AG04450 (cell line): ENCODE measurements at regions of chr22 and their contacts with region 1.

Region 1: DNA sequence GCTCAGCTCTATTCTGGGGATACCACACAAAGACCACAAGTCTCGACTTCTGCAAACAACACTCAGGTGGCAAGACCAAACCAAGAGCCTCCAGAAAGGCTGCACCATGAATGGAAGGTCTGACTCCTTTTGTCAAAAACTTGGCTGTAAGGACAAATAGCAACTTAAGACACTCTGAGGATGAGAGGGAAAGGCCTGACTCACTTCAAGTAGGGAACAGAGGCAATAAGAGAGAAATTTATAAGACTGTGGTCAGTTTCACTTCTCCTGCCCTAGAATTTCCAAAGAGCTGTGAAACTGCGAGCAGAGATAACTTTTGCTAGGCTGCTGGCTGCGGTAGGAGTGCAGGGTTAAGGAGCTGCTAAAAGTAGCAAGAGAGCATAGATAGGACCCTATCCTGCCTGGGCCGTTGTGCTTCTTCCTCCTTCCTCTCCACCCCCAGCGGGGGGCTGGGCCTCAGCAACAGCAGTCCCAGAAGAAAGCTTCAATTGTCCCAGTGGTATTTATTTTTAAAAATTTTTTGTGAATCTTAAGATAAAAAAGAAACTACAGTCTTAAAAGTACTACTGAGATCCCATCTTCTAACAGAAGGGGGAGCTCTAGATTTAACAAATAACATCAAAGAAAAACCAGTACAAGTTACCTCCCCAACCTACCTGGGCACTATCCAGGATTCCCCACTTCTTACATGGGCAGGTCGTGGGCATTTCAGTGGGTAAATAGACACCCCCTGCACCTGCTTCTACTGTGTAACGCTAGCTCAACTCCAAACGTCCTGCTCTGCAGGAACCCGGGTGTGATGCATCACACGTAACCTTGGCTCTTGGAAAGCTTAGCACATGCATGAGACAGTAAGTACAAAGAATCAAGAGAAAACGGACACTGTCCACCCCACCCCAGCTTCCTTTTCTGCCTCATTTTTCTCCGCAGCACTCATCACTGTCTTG is 66.4 kb downstream of the SGSM3 start:
- DNase-seq: peak; percentile 38
- H3K4me3 ChIP-seq: peak overlapping the region; percentile 34
- H3K27ac ChIP-seq: peak overlapping the region; percentile 74
- H3K27me3 ChIP-seq: no peaks in the 10 kb centered on the region
- CTCF ChIP-seq: peak; percentile 54; the same call in 1 of the 2 replicates

Region 2: DNA sequence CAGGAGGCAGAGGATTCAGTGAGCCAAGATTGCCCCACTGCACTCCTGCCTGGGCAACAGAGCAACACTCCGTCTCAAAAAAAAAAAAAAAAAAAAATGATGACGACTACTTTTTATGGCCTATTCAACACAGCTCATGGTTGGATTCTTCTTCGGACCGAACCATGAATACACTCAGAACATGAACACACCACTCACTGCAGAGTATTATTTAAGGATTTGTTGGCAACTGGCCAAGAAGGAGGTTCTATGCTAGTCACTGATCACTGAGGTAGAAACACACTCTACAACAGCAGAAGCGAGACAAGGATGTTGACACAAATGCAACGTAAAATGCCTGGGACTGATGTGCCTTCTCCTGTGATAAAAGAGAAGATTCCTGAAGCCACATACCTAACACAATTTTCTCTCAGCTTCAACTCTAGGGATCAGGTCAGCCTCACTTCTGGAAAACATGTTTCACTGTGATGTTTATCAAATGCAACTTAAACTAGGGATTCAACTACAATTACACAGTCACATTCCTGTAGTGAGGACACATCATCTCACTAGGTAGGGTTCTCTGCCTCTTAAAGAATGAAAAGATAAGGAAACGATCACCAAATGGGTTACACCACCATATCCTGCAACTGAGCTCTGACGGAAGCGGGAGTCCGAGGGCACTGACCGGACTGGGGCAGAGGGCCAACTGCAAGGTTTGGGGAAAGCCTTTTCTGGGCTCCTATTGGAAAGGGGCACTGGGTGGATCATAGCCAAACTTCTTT is 16.1 kb after region 1 on chr22:
- CTCF ChIA-PET with region 1: interaction called, 13 read pairs
- POLR2A ChIA-PET with region 1: interaction called, 3 read pairs
- DNase-seq: no peak
- H3K4me3 ChIP-seq: no peak overlapping the region
- H3K27ac ChIP-seq: no peak overlapping the region
- H3K27me3 ChIP-seq: no peaks in the 10 kb centered on the region
- CTCF ChIP-seq: no peak

Region 3: GRCh38 chr22:40487663-40488249 is 51.0 kb after region 1 on chr22:
- CTCF ChIA-PET with region 1: interaction called, 33 read pairs
- POLR2A ChIA-PET with region 1: no interaction called
- DNase-seq: no peak
- H3K4me3 ChIP-seq: no peak overlapping the region
- H3K27ac ChIP-seq: no peak overlapping the region
- H3K27me3 ChIP-seq: no peaks in the 10 kb centered on the region
- CTCF ChIP-seq: peak; percentile 75

Region 4: GRCh38 chr22:40525249-40525884 is 88.6 kb after region 1 on chr22:
- CTCF ChIA-PET with region 1: interaction called, 26 read pairs
- POLR2A ChIA-PET with region 1: no interaction called
- DNase-seq: no peak
- H3K4me3 ChIP-seq: no peak overlapping the region
- H3K27ac ChIP-seq: no peak overlapping the region
- H3K27me3 ChIP-seq: no peaks in the 10 kb centered on the region
- CTCF ChIP-seq: peak; percentile 73

Region 5: DNA sequence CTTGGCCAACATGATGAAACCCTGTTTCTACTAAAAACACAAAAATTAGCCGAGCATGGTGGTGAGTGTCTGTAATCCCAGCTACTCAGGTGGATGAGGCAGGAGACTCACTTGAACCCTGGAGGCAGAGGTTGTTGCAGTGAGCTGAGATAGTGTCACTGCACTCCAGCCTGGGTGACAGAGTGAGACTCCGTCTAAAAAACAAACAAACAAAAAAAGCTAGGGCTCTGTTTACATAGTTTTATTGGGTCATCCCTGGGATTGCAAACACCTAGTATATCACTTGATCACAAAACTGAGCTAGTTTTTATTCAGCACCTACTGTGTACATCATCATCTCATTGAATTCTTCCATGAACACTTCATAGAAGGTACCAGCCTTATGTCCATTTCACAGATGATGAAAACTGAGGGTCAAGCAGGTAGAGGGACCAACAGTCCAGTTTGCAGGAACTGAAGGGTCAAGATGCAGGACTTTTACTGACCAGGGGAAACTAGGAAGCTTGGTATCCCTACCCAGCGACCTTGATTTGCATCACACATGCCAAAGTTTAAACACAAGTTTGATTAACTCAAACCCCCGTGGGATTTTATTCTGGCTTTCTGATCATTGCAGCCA is 208.9 kb after region 1 on chr22:
- CTCF ChIA-PET with region 1: interaction called, 113 read pairs
- POLR2A ChIA-PET with region 1: no interaction called
- DNase-seq: no peak
- H3K4me3 ChIP-seq: no peak overlapping the region
- H3K27ac ChIP-seq: no peak overlapping the region
- H3K27me3 ChIP-seq: no peaks in the 10 kb centered on the region
- CTCF ChIP-seq: no peak

Region 6: GRCh38 chr22:40757071-40757470 is 320.3 kb after region 1 on chr22:
- CTCF ChIA-PET with region 1: interaction called, 10 read pairs
- POLR2A ChIA-PET with region 1: no interaction called
- DNase-seq: no peak
- H3K4me3 ChIP-seq: no peak overlapping the region
- H3K27ac ChIP-seq: no peak overlapping the region
- H3K27me3 ChIP-seq: no peaks in the 10 kb centered on the region
- CTCF ChIP-seq: no peak